ENCODE measurements at regions of chr18 and their contacts with region 1.

Region 1: DNA sequence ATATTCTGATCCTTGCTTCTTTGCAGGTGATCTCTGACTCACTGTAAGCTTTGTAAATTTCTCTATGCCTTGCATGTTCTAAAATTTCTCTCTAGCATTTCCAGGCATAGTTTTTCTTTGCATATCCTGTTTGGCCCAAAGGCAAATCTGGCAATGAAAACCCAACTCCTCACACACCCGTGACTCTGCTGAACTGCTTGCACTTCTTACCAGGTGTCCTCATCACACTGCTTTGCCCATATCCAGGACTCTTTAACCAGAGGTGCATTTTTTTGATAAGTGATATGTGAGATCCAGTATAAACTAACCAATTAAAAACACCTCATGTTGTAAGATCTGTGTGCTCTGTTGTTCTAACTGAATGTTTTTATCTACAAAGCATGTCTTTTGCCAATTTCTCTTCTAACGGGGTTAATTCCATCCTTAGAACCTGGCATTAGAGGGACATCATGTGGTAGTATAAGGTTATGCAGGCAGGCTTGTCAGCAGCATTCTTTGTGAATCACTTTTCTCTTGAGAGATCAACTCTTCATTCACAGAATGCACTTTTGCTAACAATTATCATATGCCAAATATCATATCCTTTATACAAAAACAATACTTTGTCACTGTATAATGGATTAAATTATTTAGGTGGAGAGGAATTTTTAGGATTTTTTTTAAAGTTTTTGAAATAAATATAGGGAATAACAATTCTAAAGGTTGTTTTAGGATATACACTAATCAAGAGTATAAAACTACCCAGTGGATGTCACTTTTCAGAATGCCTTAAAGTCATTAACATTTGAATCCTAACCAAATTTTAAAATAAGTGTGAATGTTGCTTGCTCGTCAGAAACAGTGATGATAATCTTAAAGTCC is 20.8 kb upstream of the TMX3 start:
- DNase-seq: peak in 1 of 2 experiments; percentile 12
- H3K4me3 ChIP-seq: no peak overlapping the region
- H3K4me3 Mint-ChIP-seq: no peak overlapping the region
- H3K27ac Mint-ChIP-seq: no peak overlapping the region
- H3K4me1 ChIP-seq: no peaks in the 10 kb centered on the region
- H3K4me1 Mint-ChIP-seq: no peaks in the 10 kb centered on the region
- H3K27me3 ChIP-seq: no peaks in the 10 kb centered on the region
- H3K27me3 Mint-ChIP-seq: peaks cover 3% of the 10 kb centered on the region
- CTCF ChIP-seq: peak in 1 of 2 experiments; percentile 17

Region 2: DNA sequence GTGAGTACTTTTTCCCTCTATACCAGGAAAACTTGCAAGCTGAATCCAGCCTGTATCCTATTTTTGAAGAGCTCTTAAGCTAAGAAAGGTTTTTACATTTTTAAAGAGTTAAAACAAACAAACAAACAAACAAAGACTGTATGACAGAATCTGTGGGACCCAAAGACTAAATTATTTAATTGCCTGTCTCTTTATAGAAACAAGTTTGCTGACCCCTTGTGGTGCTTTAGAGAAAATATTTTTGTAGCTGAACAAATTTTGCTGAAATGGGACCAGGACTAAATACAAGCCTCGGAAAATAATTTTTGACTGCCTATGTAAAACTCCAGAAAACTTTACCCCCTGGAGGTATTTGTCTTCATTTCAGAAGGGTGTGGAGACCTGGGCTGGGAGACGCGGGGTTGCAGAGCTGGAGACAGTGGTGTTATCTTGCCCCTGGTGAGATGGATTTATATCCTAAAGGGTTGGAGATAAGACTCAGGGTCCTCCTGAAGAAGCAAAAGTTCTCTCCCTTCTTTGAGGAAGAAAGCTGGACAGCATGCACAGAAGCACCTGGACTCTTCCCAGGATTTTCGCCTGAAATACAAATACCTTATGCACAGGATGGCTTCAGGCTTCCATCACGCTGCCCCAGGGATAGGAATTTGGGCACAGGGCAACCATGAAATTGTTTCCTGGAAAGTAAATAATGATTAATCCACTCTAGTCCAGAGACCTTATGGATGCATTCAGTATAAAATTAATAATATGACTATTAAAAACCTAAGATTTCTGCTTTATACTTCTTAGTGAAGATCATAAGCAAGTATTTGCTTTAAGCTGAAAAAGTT is 75.1 kb before region 1 on chr18:
- CTCF ChIA-PET with region 1: no interaction called
- POLR2A ChIA-PET with region 1: no interaction called
- intact Hi-C with region 1: loop called (anchors 5 kb)
- DNase-seq: no peak
- H3K4me3 ChIP-seq: no peak overlapping the region
- H3K4me3 Mint-ChIP-seq: no peak overlapping the region
- H3K27ac Mint-ChIP-seq: no peak overlapping the region
- H3K4me1 ChIP-seq: no peaks in the 10 kb centered on the region
- H3K4me1 Mint-ChIP-seq: no peaks in the 10 kb centered on the region
- H3K27me3 ChIP-seq: no peaks in the 10 kb centered on the region
- H3K27me3 Mint-ChIP-seq: no peaks in the 10 kb centered on the region
- CTCF ChIP-seq: peak in 1 of 2 experiments; percentile 16

Measured in Caco-2 (cell line).